ENCODE measurements at regions of chr1 and their contacts with region 1.

Region 1: GRCh38 chr1:23496490-23497181 is 12.7 kb upstream of the ASAP3 start:
- DNase-seq: no peak
- ATAC-seq: peak; percentile 26; the same call in 2 of the 3 replicates
- H3K4me3 ChIP-seq: no peak overlapping the region
- H3K27ac ChIP-seq: no peak overlapping the region
- H3K4me1 ChIP-seq: no peaks in the 10 kb centered on the region
- H3K27me3 ChIP-seq: no peaks in the 10 kb centered on the region
- CTCF ChIP-seq: no peak
- EP300 ChIP-seq: no peak
- POLR2A ChIP-seq: no peak
- RAD21 ChIP-seq: no peak

Region 2: DNA sequence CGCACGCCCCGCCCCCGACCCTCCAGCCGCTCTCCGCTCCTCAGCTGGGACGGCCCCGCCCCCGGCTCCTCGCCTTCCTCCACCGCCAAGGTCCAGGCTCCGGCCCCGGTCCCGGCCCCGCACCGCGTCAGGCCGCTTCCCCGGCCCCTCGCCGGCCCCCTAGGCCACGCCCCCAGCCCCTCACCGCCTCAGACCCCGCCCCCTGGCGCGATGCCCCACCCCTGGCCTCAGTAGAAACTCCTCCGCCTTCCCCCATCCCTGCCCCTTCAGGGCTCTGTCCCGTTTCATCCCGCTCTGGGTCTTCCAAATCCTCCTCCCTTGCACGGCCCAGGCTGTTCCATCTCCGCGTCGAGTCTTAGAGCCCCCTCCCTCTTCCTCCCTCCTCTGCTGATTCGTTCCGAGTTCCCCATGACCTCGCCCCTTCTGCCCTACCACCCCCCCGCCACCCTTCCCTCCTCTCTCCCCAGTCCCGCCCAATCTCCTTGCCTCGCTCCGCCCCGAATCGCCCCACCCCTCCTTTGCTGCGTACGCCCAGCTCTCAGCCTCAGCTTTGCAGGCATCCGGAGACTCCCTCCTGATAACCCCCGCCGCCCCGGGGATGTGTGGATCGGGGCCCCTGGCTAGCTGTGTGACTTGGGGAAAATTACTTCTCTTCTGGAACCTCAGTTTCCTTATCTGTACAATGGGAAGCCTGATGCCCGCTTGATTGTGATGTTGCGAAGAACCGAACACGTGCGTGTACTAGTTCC is 12.2 kb before region 1 on chr1:
- CTCF ChIA-PET with region 1: interaction called, 19 read pairs
- POLR2A ChIA-PET with region 1: interaction called, 3 read pairs
- RAD21 ChIA-PET with region 1: interaction called, 16 read pairs
- SMC1A ChIA-PET with region 1: interaction called, 9 read pairs
- in situ Hi-C with region 1: no loop called
- intact Hi-C with region 1: no loop called
- DNase-seq: peak; percentile 30
- ATAC-seq: peak; percentile 91
- H3K4me3 ChIP-seq: peak overlapping the region; percentile 58; the same call in 1 of the 2 replicates
- H3K27ac ChIP-seq: no peak overlapping the region
- H3K4me1 ChIP-seq: peaks cover 15% of the 10 kb centered on the region
- H3K27me3 ChIP-seq: peaks cover 6 to 14% of the 10 kb centered on the region in 2 experiments
- CTCF ChIP-seq: no peak
- EP300 ChIP-seq: no peak
- POLR2A ChIP-seq: no peak
- RAD21 ChIP-seq: no peak

Region 3: DNA sequence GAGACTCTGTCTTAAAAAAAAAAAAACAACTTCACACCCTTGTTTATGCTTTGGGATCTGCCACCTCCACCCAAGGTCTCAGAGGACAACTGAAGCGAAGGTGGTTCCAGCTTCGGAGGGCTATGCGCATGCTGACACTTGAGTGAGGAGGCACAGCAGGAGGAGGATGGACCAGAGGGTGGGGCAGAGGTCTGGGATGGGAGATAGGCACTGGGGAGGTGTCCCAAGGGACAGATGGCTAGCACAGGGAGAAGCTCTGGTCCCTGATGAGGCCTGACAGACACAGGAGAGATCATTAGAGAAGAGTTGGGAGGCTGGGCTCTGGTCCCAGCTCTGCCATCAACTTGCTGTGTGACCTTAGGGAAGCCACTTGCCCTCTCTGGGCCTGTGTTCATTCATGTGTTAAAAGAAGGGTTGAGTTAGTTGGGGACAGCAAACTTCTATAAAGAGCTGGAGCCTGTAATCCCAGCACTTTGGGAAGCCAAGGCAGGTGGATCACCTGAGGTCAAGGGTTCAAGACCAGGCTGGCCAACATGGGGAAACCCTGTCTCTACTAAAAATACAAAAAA is 17.6 kb after region 1 on chr1:
- CTCF ChIA-PET with region 1: interaction called, 784 read pairs
- POLR2A ChIA-PET with region 1: interaction called, 7 read pairs
- RAD21 ChIA-PET with region 1: interaction called, 3 read pairs
- SMC1A ChIA-PET with region 1: interaction called, 201 read pairs
- in situ Hi-C with region 1: no loop called
- intact Hi-C with region 1: no loop called
- DNase-seq: no peak
- ATAC-seq: no peak
- H3K4me3 ChIP-seq: no peak overlapping the region
- H3K27ac ChIP-seq: no peak overlapping the region
- H3K4me1 ChIP-seq: no peaks in the 10 kb centered on the region
- H3K27me3 ChIP-seq: no peaks in the 10 kb centered on the region
- CTCF ChIP-seq: no peak
- EP300 ChIP-seq: no peak
- POLR2A ChIP-seq: no peak
- RAD21 ChIP-seq: no peak

Region 4: DNA sequence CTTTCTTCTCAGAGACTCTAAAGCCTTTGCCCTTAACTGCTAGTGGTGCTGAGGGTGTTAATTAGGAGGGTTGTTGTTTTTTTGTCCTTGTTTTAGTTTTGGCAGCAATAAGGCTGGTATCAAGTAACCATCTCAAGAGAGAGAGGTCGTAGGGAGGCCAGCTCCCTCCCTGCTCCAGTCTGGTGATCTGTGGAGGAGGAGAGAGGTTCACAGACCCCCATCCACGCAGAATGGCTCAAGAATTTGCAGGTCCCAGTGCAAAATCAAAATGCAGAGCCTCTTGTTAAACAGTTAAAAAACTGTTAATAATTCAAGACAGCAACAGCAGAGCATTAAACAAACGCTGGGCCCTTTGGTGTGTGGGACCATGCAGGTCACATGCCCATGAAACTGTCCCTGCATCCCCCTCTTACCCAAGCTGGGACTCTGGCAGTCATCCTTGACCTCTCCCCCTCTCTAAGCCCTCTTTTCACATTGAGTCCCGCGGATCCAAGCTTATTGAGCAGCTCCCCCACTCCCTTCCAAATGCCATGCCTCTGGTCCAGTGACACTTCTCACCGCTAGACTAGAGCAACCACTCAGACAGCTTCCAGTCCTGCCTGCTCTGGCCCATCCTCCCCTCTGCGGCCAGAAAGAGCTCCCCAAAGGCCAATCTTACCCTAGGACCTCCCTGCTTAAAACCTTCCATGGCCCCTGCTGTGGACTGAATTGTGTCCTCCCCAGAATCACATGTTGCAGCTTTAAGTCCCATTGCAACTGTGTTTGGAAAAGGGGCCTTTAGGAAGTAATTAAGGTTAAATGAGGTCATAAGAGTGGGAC is 147.3 kb after region 1 on chr1:
- CTCF ChIA-PET with region 1: interaction called, 103 read pairs
- POLR2A ChIA-PET with region 1: no interaction called
- RAD21 ChIA-PET with region 1: interaction called, 66 read pairs
- SMC1A ChIA-PET with region 1: interaction called, 16 read pairs
- in situ Hi-C with region 1: loop called (anchors 5 kb)
- intact Hi-C with region 1: no loop called
- DNase-seq: no peak
- ATAC-seq: no peak
- H3K4me3 ChIP-seq: no peak overlapping the region
- H3K27ac ChIP-seq: no peak overlapping the region
- H3K4me1 ChIP-seq: peaks cover 3% of the 10 kb centered on the region; the same call in 1 of the 2 replicates
- H3K27me3 ChIP-seq: 0 out of 4 replicates have a peak, but pooled peaks cover 0 to 1% of the 10 kb centered on the region in 2 experiments
- CTCF ChIP-seq: no peak
- EP300 ChIP-seq: no peak
- POLR2A ChIP-seq: no peak
- RAD21 ChIP-seq: no peak

Region 5: DNA sequence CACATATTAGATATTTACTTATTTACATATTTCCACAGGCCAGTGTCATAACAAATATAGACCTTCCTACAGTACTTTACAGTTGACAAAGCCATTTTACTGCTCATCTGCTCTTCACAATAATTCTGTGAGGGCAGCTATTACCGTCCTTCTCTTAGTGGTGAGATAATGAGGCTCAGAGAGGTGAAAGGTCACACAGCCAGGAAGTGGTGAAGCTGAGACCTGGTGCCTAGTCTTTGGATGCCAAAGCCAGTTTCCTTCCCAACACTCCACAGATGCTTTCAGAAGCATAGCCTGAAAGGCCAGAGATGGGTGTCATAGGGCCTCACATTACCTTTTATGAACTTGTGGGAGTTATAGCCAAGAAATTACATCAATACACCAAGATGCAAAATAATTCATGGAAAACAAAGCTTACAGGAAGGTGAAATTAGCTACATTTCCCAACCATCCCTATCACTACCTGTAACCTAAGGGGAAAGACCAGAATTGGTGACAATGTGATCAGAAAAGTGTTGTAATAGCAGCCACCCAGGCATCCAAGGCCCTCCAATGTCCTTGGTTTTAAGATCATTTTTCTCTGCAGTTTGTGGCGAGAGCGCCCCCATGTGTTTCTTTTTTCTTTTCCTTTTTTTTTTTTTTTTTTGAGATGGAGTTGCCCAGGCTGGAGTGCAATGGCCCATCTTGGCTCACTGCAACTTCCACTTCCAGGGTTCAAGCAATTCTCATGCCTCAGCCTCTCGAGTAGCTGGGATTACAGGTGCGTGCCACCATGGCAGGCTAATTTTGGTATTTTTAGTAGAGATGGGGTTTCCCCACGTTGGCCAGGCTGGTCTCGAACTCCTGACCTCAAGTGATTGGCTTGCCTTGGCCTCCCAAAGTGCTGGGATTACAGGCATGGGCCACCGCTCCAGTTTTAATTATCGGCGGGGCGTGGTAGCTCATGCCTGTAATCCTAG is 168.5 kb after region 1 on chr1:
- CTCF ChIA-PET with region 1: interaction called, 12 read pairs
- POLR2A ChIA-PET with region 1: interaction called, 4 read pairs
- RAD21 ChIA-PET with region 1: interaction called, 4 read pairs
- SMC1A ChIA-PET with region 1: interaction called, 5 read pairs
- in situ Hi-C with region 1: no loop called
- intact Hi-C with region 1: no loop called
- DNase-seq: peak; percentile 15
- ATAC-seq: peak; percentile 89
- H3K4me3 ChIP-seq: no peak overlapping the region
- H3K27ac ChIP-seq: no peak overlapping the region
- H3K4me1 ChIP-seq: peaks cover 6% of the 10 kb centered on the region; the same call in 1 of the 2 replicates
- H3K27me3 ChIP-seq: no peaks in the 10 kb centered on the region
- CTCF ChIP-seq: peak; percentile 6 to 45 (median 23); a peak in 3 of 6 replicates
- EP300 ChIP-seq: no peak
- POLR2A ChIP-seq: no peak
- RAD21 ChIP-seq: peak; percentile 41

Measured in GM12878 (cell line).